Ovary (tissue), 10 donors: ENCODE measurements at regions of chr4 and their contacts with region 1.

Region 1: DNA sequence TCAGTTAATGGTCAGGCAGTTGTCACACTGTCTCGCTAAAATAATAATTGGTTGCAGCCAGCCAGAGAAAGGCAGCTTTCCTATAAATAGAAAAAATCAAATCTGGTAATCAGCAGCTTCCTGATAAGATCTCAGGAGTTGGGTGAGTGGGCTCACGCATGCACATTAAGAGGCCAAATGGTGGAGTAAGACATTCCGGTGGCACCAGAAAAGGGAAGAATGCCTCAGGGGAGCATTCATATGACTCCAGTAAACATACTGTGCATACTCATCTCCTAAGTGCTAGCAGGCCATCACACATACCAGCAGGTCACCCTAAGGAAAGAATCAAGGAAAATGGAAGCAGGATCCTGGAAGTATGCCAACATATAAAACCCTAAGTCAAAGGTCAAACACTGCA is 40.1 kb downstream of the UGT2B15 start:
- DNase-seq: no peak
- H3K4me3 ChIP-seq: no peak overlapping the region
- H3K27ac ChIP-seq: no peak overlapping the region
- H3K4me1 ChIP-seq: no peaks in the 10 kb centered on the region
- H3K27me3 ChIP-seq: no peaks in the 10 kb centered on the region
- CTCF ChIP-seq: no peak
- EP300 ChIP-seq: no peak
- POLR2A ChIP-seq: no peak

Region 2: GRCh38 chr4:67909905-67910584 is 720.3 kb before region 1 on chr4:
- intact Hi-C with region 1: no loop called
- DNase-seq: no peak
- H3K4me3 ChIP-seq: no peak overlapping the region
- H3K27ac ChIP-seq: no peak overlapping the region
- H3K4me1 ChIP-seq: no peaks in the 10 kb centered on the region
- H3K27me3 ChIP-seq: no peaks in the 10 kb centered on the region
- CTCF ChIP-seq: no peak
- EP300 ChIP-seq: no peak
- POLR2A ChIP-seq: no peak

Region 3: GRCh38 chr4:68498413-68499007 is 131.9 kb before region 1 on chr4:
- intact Hi-C with region 1: loop called in 1 of 4 experiments (anchors 10 kb)
- DNase-seq: peak in 2 of 5 donors; percentile 33 to 36
- H3K4me3 ChIP-seq: no peak overlapping the region
- H3K27ac ChIP-seq: no peak overlapping the region
- H3K4me1 ChIP-seq: no peaks in the 10 kb centered on the region
- H3K27me3 ChIP-seq: no peaks in the 10 kb centered on the region
- CTCF ChIP-seq: peak in 1 of 3 donors; percentile 29
- EP300 ChIP-seq: no peak
- POLR2A ChIP-seq: no peak